Transverse colon (tissue), 4 donors: ENCODE measurements at regions of chr1 and their contacts with region 1.

Region 1: GRCh38 chr1:6788946-6789345 is 3.7 kb downstream of the CAMTA1 start:
- DNase-seq: no peak
- H3K4me3 ChIP-seq: no peak overlapping the region
- H3K27ac ChIP-seq: no peak overlapping the region
- H3K4me1 ChIP-seq: peaks cover 4 to 20% (median 13%) of the 10 kb centered on the region in 4 donors
- H3K27me3 ChIP-seq: no peaks in the 10 kb centered on the region
- CTCF ChIP-seq: no peak
- EP300 ChIP-seq: no peak
- POLR2A ChIP-seq: no peak

Region 2: GRCh38 chr1:6822530-6823359 is 33.8 kb after region 1 on chr1:
- in situ Hi-C with region 1: no loop called
- intact Hi-C with region 1: loop called (anchors 1 kb)
- DNase-seq: peak; percentile 61
- H3K4me3 ChIP-seq: peak overlapping the region in 2 of 4 donors; percentile 17 to 35
- H3K27ac ChIP-seq: peak overlapping the region; percentile 75 to 84 (median 82)
- H3K4me1 ChIP-seq: peaks cover 14 to 86% (median 42%) of the 10 kb centered on the region in 4 donors
- H3K27me3 ChIP-seq: no peaks in the 10 kb centered on the region
- CTCF ChIP-seq: no peak
- EP300 ChIP-seq: no peak
- POLR2A ChIP-seq: peak; percentile 39